GM23248 (cell line): ENCODE measurements at regions of chr3 and their contacts with region 1.

Region 1: GRCh38 chr3:11803977-11804892 is 42.5 kb downstream of the TAMM41 start:
- DNase-seq: peak; percentile 79
- H3K4me3 ChIP-seq: no peak overlapping the region
- H3K27ac ChIP-seq: no peak overlapping the region
- H3K4me1 ChIP-seq: peaks cover 15% of the 10 kb centered on the region
- H3K27me3 ChIP-seq: no peaks in the 10 kb centered on the region

Region 2: DNA sequence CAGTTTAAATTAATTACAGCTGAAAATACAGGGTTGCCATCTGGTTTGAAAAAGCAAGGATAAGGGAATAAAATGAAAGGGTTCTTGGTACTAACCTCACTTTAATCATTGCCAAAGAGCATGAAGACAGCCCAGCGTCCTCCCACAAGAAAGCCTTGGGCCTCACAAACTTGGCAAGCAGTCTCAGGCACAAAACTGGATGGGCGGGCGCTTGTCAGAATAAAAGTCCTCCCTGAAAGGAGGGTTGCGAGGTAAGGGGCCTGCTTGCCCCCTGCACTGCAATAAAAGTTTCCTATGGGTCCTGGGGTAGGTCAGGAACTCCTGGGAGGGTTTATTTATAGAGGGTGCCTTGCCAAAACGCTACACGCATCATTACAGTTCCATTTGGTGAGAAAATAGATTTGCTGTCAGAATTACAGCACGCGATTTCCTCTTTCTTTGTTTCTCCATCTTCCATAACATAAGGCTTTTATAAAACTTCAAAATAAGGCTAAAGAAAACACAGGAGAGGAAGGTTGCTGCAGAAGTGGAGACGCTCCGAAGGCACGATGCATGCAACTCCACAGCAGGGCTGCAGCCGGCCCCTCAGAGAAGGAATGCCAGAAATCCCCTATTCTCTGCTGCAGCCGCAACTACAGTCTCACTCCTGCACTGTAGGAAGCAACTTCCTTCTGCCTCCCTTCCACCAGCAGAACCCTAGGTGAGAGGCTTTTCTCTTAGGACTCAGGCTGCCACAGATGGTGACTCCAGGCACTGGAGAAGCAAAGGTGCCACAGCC is 221.9 kb before region 1 on chr3:
- in situ Hi-C with region 1: no loop called
- DNase-seq: peak; percentile 91
- H3K4me3 ChIP-seq: peak overlapping the region; percentile 68
- H3K27ac ChIP-seq: peak overlapping the region; percentile 77
- H3K4me1 ChIP-seq: peaks cover 60% of the 10 kb centered on the region
- H3K27me3 ChIP-seq: no peaks in the 10 kb centered on the region

Region 3: GRCh38 chr3:11662402-11662990 is 141.7 kb before region 1 on chr3:
- in situ Hi-C with region 1: loop called (anchors 10 kb)
- DNase-seq: peak; percentile 57
- H3K4me3 ChIP-seq: no peak overlapping the region
- H3K27ac ChIP-seq: no peak overlapping the region
- H3K4me1 ChIP-seq: peaks cover 4% of the 10 kb centered on the region; the same call in 1 of the 2 replicates
- H3K27me3 ChIP-seq: no peaks in the 10 kb centered on the region